Gastrocnemius medialis (tissue), 4 donors: ENCODE measurements at regions of chr7 and their contacts with region 1.

Region 1: DNA sequence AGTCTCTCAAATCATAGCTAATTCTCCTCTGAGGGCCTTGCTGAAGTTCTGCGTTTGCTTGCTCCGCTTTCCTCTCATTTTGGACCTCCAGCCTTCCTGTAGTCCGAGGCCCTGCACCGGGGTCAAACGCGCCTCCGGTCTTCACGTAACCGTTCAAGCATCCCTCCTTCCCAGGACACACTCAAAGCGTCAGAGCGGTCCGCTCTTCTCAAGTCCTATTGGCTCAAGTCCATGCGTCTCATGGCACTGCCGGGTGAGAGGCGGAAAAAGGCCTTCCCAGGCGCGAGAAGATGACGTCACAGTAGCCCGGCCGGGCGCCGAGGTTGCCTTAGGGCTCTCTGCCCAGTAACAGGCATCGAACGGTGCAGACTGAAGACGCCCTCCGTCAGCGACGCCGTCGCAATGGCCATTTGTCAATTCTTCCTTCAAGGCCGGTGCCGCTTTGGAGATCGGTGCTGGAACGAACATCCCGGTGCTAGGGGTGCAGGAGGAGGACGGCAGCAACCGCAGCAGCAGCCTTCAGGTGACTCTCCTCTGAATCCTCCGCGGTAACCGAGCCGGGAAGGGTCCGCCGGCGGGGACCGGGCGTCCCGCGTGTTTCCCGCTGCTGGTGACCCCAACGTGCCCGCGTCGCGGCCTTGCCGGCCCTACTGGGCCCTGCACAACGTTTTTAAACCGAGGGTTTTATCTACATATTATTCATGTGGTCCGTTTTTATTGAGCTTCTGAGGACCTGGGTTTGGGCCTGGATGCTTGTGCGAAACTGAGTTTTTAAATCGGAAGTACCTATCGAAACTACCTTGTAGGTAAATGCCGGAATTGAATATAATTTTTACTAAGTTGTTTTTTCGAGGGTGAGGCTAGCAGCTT is at the start of gene NUP42:
- DNase-seq: peak; percentile 91 to 95
- ATAC-seq: peak; percentile 97 to 98
- H3K4me3 ChIP-seq: peak within 1 kb of the TSS; percentile 71 to 96 (median 86)
- H3K27ac ChIP-seq: peak within 1 kb of the TSS; percentile 83 to 94 (median 89)
- H3K4me1 ChIP-seq: peaks cover 22 to 24% of the 10 kb centered on the region in 2 donors
- H3K27me3 ChIP-seq: no peaks in the 10 kb centered on the region
- CTCF ChIP-seq: no peak
- POLR2A ChIP-seq: peak; percentile 51 to 52
- total RNA-seq, gene NUP42: 10.0 to 38.6 (median 15.6) TPM

Region 2: GRCh38 chr7:21427182-21427870 is 1754.6 kb before region 1 on chr7:
- in situ Hi-C with region 1: no loop called
- intact Hi-C with region 1: loop called (anchors 5 kb)
- DNase-seq: peak; percentile 98 to 99
- ATAC-seq: peak; percentile 86
- H3K4me3 ChIP-seq: peak overlapping the region; percentile 66 to 96 (median 88)
- H3K27ac ChIP-seq: peak overlapping the region; percentile 92 to 100 (median 100)
- H3K4me1 ChIP-seq: peaks cover 37 to 42% of the 10 kb centered on the region in 2 donors
- H3K27me3 ChIP-seq: no peaks in the 10 kb centered on the region
- CTCF ChIP-seq: peak in 4 of 5 experiments; percentile 4 to 56 (median 28)
- POLR2A ChIP-seq: peak in 1 of 2 donors; percentile 76

Region 3: GRCh38 chr7:23105644-23106056 is 76.3 kb before region 1 on chr7 and contains the start of gene KLHL7:
- in situ Hi-C with region 1: loop called in 3 of 4 experiments (anchors 5 to 10 kb)
- intact Hi-C with region 1: loop called (anchors 1 kb)
- DNase-seq: peak; percentile 95 to 96
- ATAC-seq: peak; percentile 95 to 97
- H3K4me3 ChIP-seq: peak within 1 kb of the TSS; percentile 84 to 99 (median 88)
- H3K27ac ChIP-seq: peak within 1 kb of the TSS; percentile 87 to 96 (median 92)
- H3K4me1 ChIP-seq: peaks cover 33 to 48% of the 10 kb centered on the region in 2 donors
- H3K27me3 ChIP-seq: no peaks in the 10 kb centered on the region
- CTCF ChIP-seq: peak in 1 of 5 experiments; percentile 16
- POLR2A ChIP-seq: peak; percentile 86 to 90
- total RNA-seq, gene KLHL7: 12.2 to 21.4 (median 14.9) TPM

Region 4: DNA sequence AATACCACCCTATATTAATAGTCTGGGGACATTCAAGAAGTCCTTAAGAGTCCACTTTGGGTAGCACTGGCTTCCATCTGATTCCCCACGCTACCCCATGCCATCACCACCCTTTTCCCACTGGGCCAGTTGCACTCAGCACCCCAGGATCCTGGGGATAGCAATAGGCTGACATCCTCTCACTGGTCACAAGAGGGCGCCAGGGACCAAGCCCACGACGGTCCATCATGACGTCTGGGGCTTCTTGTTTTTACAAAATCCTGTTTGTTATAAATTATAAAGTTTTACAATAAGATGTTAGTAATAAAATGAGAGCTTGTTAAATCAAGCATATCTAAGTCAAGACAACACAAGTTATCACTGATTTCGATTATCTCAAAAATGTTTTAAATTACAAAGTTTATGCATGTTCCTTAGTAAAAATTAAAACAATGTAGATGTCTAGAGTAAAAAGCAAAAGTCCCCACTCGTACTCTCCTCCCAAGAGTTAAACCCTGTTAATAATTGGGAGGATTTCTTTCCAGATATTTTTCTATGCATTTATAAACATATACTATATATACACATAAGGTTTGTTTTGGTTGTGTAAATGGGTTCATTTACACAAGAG is 80.0 kb after region 1 on chr7:
- in situ Hi-C with region 1: loop called in 1 of 4 experiments (anchors 10 kb)
- intact Hi-C with region 1: loop called (anchors 5 kb)
- DNase-seq: peak in 1 of 2 donors; percentile 13
- ATAC-seq: peak in 1 of 2 donors; percentile 78
- H3K4me3 ChIP-seq: no peak overlapping the region
- H3K27ac ChIP-seq: no peak overlapping the region
- H3K4me1 ChIP-seq: no peaks in the 10 kb centered on the region
- H3K27me3 ChIP-seq: no peaks in the 10 kb centered on the region
- CTCF ChIP-seq: peak; percentile 43 to 76 (median 49)
- POLR2A ChIP-seq: no peak

Region 5: GRCh38 chr7:23298885-23299769 is 117.2 kb after region 1 on chr7 and contains the start of gene MALSU1:
- in situ Hi-C with region 1: no loop called
- intact Hi-C with region 1: loop called (anchors 2 kb)
- DNase-seq: peak; percentile 94 to 95
- ATAC-seq: peak; percentile 100
- H3K4me3 ChIP-seq: peak within 1 kb of the TSS; percentile 78 to 99 (median 91)
- H3K27ac ChIP-seq: peak within 1 kb of the TSS; percentile 86 to 93 (median 88)
- H3K4me1 ChIP-seq: peaks cover 25 to 34% of the 10 kb centered on the region in 2 donors
- H3K27me3 ChIP-seq: no peaks in the 10 kb centered on the region
- CTCF ChIP-seq: no peak
- POLR2A ChIP-seq: peak; percentile 83 to 90
- total RNA-seq, gene MALSU1: 83.8 to 112 (median 109) TPM

Region 6: DNA sequence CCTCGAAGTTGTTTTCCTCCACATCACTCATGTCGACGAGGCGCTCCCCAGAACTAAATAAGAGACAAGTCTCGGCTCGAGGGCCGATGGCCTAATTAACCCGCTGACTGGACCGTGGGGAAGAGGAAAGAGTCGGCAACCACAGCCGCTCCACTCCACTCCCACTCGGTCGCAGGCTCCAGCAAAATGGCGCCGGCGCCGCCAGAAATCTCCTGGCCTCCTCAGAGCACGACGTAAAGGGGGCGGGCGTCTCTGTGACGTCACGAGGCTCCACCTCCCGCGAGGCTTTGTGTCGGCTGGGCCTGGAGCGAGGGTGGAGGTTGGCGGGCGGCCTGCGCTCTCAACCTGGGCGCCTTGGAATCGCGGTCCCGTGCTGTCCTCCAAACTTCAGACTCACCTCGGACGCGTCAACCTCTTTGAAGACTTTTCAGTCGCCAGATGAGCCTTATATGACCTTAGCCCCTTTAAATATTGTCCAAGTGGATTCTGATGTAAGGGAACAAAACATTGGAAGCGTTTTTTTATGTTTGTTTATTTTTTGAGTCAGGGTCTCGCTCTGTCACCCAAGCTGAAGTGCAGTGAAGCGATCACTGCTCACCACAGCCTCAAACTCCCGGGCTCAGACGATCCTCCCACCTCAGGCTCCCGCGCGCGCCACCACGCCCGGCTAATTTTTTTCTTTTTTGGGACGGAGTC is 350.0 kb after region 1 on chr7 and contains the start of gene TRA2A:
- in situ Hi-C with region 1: no loop called
- intact Hi-C with region 1: loop called (anchors 10 kb)
- DNase-seq: peak; percentile 95 to 96
- ATAC-seq: peak; percentile 97
- H3K4me3 ChIP-seq: peak within 1 kb of the TSS; percentile 79 to 95 (median 90)
- H3K27ac ChIP-seq: peak within 1 kb of the TSS; percentile 95 to 97 (median 97)
- H3K4me1 ChIP-seq: peaks cover 35 to 36% of the 10 kb centered on the region in 2 donors
- H3K27me3 ChIP-seq: no peaks in the 10 kb centered on the region
- CTCF ChIP-seq: peak in 1 of 5 experiments; percentile 20
- POLR2A ChIP-seq: peak; percentile 92 to 97
- total RNA-seq, gene TRA2A: 4.8 to 6.4 (median 5.7) TPM